Dendritic cell treated with granulocyte-macrophage colony-stimulating factor and Interleukin-4, amounts not matched to agents 40 ng/mL and 50 ng/mL, for 4 days (primary cell): ENCODE measurements at regions of chr12 and their contacts with region 1.

Region 1: DNA sequence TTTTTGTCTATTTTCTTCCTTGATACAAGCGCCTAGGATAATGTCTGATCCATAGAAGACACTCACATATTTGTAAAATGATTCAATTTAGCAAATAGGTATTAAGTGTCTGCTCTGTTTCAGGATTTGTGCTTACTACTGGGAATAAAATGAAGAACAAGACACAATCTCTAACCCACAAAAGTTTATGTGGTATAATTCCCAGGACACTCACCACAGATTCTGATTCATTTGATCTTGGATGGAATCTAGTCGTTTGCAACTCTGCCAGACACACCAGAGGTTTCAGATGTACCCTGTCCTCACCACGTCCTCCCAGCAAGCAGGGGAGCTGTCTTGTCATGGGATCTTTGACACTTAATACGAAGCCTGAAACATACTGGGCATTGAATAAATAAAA is 208.3 kb downstream of the LRIG3 start:
- H3K4me3 Mint-ChIP-seq: no peak overlapping the region
- H3K27ac Mint-ChIP-seq: no peak overlapping the region
- H3K4me1 Mint-ChIP-seq: no peaks in the 10 kb centered on the region
- H3K27me3 Mint-ChIP-seq: no peaks in the 10 kb centered on the region

Region 2: GRCh38 chr12:58656254-58657009 is 55.5 kb before region 1 on chr12:
- intact Hi-C with region 1: no loop called
- H3K4me3 Mint-ChIP-seq: no peak overlapping the region
- H3K27ac Mint-ChIP-seq: no peak overlapping the region
- H3K4me1 Mint-ChIP-seq: no peaks in the 10 kb centered on the region
- H3K27me3 Mint-ChIP-seq: no peaks in the 10 kb centered on the region

Region 3: DNA sequence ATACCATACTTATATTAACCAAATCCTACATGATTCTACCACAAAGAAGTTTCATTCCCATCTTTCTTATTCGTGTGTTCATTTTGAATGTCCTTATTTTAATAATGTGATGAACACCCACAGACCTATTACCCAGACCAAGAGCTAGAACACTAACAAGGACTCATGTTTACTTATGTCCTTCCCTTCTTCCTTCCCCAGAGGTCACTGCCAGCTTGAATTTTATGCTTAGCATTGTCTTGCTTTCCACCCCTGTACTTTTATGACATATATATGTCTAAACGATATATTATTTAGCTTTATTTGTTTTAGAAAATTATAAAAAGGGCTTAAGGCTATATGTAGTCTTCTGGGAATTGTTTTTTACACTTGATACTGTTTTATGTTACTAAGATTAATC is 30.2 kb before region 1 on chr12:
- intact Hi-C with region 1: loop called (anchors 1 kb)
- H3K4me3 Mint-ChIP-seq: no peak overlapping the region
- H3K27ac Mint-ChIP-seq: no peak overlapping the region
- H3K4me1 Mint-ChIP-seq: no peaks in the 10 kb centered on the region
- H3K27me3 Mint-ChIP-seq: no peaks in the 10 kb centered on the region

Region 4: DNA sequence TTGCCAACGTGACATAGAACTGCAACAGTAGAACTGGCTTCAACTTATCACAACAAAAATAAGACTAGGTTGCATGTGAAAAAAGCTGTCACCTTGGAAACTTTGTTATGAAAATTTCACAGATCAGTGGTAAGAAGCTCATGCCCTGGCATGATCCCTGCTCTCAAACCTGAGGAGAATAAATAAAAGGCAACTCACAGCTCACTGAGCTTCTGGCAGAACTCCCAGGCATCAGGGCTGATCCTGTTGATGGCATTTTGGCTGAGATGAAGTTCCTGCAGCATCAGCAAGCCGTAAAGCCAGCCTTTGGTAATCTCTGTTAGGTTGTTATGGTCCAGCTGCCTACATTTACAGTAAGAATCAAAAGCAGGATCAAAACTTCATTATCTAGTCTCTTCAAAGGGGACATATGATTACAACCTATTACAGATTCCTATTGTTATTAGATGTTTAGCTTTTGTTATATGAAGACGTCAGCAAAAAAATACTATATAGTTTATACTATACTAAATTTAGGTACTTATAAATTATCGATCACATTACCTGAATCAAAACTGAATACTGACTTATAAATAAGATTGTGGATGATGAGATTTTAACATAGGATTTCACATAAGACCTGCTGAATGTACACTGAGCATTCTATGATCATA is 176.3 kb after region 1 on chr12:
- intact Hi-C with region 1: no loop called
- H3K4me3 Mint-ChIP-seq: no peak overlapping the region
- H3K27ac Mint-ChIP-seq: no peak overlapping the region
- H3K4me1 Mint-ChIP-seq: no peaks in the 10 kb centered on the region
- H3K27me3 Mint-ChIP-seq: no peaks in the 10 kb centered on the region